ENCODE measurements at regions of chr13 and their contacts with region 1.

Region 1: GRCh38 chr13:112910616-112911364 is 58.2 kb upstream of the MCF2L start:
- DNase-seq: no peak
- ATAC-seq: no peak
- H3K4me3 ChIP-seq: no peak overlapping the region
- H3K27ac ChIP-seq: no peak overlapping the region
- H3K4me1 ChIP-seq: peaks cover 4 to 10% of the 10 kb centered on the region in 2 experiments
- H3K27me3 ChIP-seq: no peaks in the 10 kb centered on the region
- CTCF ChIP-seq: no peak
- POLR2A ChIP-seq: no peak
- RAD21 ChIP-seq: no peak

Region 2: DNA sequence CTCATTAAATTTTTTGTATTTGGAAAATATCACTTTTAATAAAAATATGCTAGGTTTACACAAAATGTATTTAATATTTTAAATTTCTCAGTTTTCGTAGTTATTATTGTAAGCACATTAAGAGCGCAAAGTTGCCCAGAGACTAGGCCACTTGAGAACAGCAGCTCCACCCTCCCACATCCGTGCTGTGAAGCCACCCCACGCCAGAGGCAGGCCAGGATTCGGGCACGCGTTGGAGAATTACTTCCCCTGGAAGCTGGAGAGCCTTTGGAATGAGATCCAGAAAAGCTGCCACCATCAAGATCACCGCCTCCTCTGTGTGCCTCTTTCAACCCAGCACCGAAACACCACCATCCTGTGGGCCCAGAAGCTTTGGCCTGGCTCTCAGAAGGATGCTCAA is 575.7 kb before region 1 on chr13:
- CTCF ChIA-PET with region 1: no interaction called
- POLR2A ChIA-PET with region 1: no interaction called
- RAD21 ChIA-PET with region 1: no interaction called
- intact Hi-C with region 1: loop called (anchors 5 kb)
- DNase-seq: no peak
- ATAC-seq: no peak
- H3K4me3 ChIP-seq: no peak overlapping the region
- H3K27ac ChIP-seq: no peak overlapping the region
- H3K4me1 ChIP-seq: peaks cover 0 to 9% of the 10 kb centered on the region in 2 experiments; a peak in 2 of 4 replicates
- H3K27me3 ChIP-seq: peaks cover 21% of the 10 kb centered on the region
- CTCF ChIP-seq: no peak
- POLR2A ChIP-seq: no peak
- RAD21 ChIP-seq: no peak

Measured in HCT116 (cell line).